SK-N-SH (cell line): ENCODE measurements at regions of chr12 and their contacts with region 1.

Region 1: GRCh38 chr12:57836442-57837375 is 9.8 kb downstream of the CTDSP2 start:
- DNase-seq: no peak
- H3K4me3 ChIP-seq: peak overlapping the region in 1 of 2 experiments; percentile 30; a peak in 1 of 4 replicates
- H3K27ac ChIP-seq: peak overlapping the region; percentile 67 to 73
- H3K4me1 ChIP-seq: peaks cover 75 to 94% of the 10 kb centered on the region in 2 experiments
- H3K27me3 ChIP-seq: no peaks in the 10 kb centered on the region
- CTCF ChIP-seq: no peak
- EP300 ChIP-seq: peak in 1 of 2 experiments; percentile 36; a peak in 1 of 4 replicates
- RAD21 ChIP-seq: no peak

Region 2: GRCh38 chr12:57765042-57765697 is 71.5 kb before region 1 on chr12:
- CTCF ChIA-PET with region 1: no interaction called
- POLR2A ChIA-PET with region 1: no interaction called
- DNase-seq: peak; percentile 81
- H3K4me3 ChIP-seq: peak overlapping the region in 1 of 2 experiments; percentile 34; a peak in 2 of 4 replicates
- H3K27ac ChIP-seq: no peak overlapping the region
- H3K4me1 ChIP-seq: peaks cover 0 to 24% of the 10 kb centered on the region in 2 experiments; a peak in 1 of 4 replicates
- H3K27me3 ChIP-seq: no peaks in the 10 kb centered on the region; the same call in 1 of the 2 replicates
- CTCF ChIP-seq: peak; percentile 41
- EP300 ChIP-seq: no peak
- RAD21 ChIP-seq: no peak

Region 3: GRCh38 chr12:57803319-57803893 is 33.3 kb before region 1 on chr12:
- CTCF ChIA-PET with region 1: interaction called, 12 read pairs
- POLR2A ChIA-PET with region 1: no interaction called
- DNase-seq: peak; percentile 68
- H3K4me3 ChIP-seq: no peak overlapping the region
- H3K27ac ChIP-seq: no peak overlapping the region
- H3K4me1 ChIP-seq: no peaks in the 10 kb centered on the region; a peak in 1 of 4 replicates
- H3K27me3 ChIP-seq: no peaks in the 10 kb centered on the region
- CTCF ChIP-seq: peak; percentile 79
- EP300 ChIP-seq: no peak
- RAD21 ChIP-seq: peak; percentile 64

Region 4: DNA sequence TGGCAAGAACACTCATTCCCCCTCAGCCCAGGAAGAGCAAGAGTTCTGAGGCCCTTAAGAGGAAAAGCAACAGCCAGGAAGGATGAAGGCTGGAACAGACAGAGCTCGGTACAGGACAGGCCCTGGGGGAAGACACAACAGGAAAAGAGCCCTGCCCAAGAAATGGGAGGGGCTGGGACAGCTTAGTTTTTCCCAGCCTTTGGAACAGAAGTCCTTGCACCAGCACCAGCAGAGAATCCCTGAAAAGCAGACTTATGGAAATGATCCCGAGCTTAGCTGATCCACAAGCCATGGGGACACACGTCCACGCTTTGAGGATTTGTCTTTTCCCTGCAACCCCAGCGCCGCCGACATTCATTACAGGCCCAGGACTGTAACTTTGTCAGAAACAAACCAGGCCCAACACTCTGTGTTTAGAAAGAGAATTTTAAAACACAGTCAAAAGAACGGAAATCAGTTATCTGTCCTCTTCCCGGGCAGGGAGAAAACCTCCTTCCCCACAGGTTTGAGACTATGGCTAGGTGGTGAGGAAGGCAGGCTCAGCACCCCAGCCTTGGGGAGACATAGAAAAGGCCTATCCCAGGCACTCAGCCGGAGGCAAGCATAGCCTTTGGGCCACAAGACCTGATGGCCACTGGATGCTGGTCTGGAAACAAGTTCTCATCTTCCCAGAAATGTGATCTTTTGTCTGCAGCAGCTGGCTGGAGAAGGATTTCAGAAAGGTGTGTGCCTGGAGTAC is 14.1 kb before region 1 on chr12:
- CTCF ChIA-PET with region 1: interaction called, 11 read pairs
- POLR2A ChIA-PET with region 1: interaction called, 3 read pairs
- DNase-seq: no peak
- H3K4me3 ChIP-seq: no peak overlapping the region
- H3K27ac ChIP-seq: no peak overlapping the region
- H3K4me1 ChIP-seq: no peaks in the 10 kb centered on the region; a peak in 1 of 4 replicates
- H3K27me3 ChIP-seq: no peaks in the 10 kb centered on the region
- CTCF ChIP-seq: no peak
- EP300 ChIP-seq: no peak
- RAD21 ChIP-seq: no peak

Region 5: GRCh38 chr12:57846577-57847319 is 10.0 kb after region 1 on chr12 and contains the start of gene CTDSP2:
- CTCF ChIA-PET with region 1: interaction called, 36 read pairs
- POLR2A ChIA-PET with region 1: interaction called, 3 read pairs
- DNase-seq: peak; percentile 99
- H3K4me3 ChIP-seq: peak within 1 kb of the TSS; percentile 88 to 99
- H3K27ac ChIP-seq: peak within 1 kb of the TSS; percentile 94 to 99
- H3K4me1 ChIP-seq: peaks cover 24 to 29% of the 10 kb centered on the region in 2 experiments; a peak in 3 of 4 replicates
- H3K27me3 ChIP-seq: no peaks in the 10 kb centered on the region
- CTCF ChIP-seq: no peak
- EP300 ChIP-seq: no peak
- RAD21 ChIP-seq: no peak
- polyA plus RNA-seq, gene CTDSP2: 117 and 119 TPM in 2 replicates

Region 6: DNA sequence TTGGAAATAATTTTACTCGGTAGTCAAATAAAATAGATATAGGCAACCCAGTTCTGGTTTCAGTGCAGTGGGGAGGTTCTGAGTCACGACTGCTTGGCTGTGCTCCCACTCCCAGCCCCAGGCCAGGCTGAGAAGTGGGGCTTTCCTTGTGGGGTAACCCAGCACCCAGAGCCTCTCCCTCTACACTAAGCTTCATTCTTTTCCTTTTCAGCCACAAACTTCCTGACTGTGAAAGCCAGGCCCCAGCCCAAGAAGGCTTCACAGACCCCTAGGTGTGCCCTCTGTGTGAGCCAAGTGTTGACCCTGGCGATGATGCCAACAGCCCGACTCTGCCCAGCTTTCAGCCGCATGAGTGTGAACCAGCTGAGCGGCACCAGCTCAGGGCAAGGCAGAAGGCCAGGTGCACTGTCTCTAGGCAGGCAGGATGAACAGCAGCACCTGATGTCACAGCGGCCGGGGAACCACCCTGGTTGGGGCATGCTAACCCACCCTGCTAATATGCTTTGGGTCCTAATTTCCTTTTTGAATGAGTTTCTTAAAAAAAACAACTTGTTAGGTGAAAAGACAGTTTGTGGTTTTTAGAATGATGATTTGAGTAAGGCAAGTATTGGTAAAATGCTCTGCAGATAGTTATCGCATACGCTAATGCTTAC is 62.4 kb after region 1 on chr12:
- CTCF ChIA-PET with region 1: interaction called, 146 read pairs
- POLR2A ChIA-PET with region 1: interaction called, 4 read pairs
- DNase-seq: no peak
- H3K4me3 ChIP-seq: no peak overlapping the region; a peak in 1 of 4 replicates
- H3K27ac ChIP-seq: peak overlapping the region; percentile 48 to 79
- H3K4me1 ChIP-seq: peaks cover 52% of the 10 kb centered on the region in 2 experiments
- H3K27me3 ChIP-seq: no peaks in the 10 kb centered on the region
- CTCF ChIP-seq: no peak
- EP300 ChIP-seq: no peak
- RAD21 ChIP-seq: no peak